Activated CD4-positive, alpha-beta T cell treated with anti-CD3 and anti-CD28 coated beads for 36 hours (primary cell): ENCODE measurements at regions of chr22 and their contacts with region 1.

Region 1: DNA sequence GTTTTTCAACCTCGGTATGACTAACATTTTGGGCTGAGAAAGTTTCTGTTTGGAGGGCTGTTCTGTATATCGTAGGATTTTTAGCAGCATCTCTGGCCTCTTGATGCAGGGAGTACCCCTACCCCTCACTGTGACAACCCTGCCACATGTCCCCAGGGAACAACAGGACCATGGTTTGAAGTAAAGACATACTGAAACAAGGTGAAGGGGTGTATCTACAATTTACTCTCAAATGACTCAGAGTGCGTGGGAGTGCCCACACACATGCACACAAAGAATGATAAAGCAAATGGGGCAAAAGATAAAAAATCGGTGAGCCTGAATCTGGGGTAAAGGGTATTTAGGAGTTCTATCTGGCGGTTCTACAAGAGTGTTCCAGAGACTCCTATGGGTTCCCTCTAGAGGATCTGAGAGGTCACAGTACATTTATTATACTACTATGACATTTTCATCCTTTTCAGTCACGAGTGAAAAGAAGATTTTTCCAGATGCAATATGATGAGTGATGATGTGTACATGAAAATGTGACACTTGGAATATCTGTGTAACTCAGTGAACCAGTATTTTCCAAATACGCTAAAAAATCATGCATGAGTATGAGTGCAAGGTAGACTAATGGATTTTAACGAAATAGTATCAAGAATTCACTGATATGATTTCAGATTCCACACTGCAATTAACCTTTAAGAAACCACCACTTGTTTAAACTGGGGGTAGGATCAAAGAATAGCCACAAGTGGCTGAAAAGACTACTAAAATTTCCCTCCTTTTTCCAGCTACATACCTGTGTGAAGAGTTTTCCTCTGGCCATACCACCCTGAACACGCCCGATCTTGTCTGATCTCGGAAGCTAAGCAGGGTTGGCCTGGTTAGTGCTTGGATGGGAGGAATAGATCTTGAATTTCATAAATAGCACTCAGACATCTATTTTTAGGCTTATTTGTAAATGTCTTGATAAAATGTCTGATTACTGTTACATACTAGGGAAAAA is 56.3 kb upstream of the YPEL1 start:
- DNase-seq: peak; percentile 70
- ATAC-seq: peak; percentile 93
- H3K4me3 Mint-ChIP-seq: peak overlapping the region; percentile 15
- H3K27ac Mint-ChIP-seq: peak overlapping the region; percentile 56
- H3K4me1 Mint-ChIP-seq: peaks cover 16% of the 10 kb centered on the region
- H3K27me3 Mint-ChIP-seq: no peaks in the 10 kb centered on the region

Region 2: DNA sequence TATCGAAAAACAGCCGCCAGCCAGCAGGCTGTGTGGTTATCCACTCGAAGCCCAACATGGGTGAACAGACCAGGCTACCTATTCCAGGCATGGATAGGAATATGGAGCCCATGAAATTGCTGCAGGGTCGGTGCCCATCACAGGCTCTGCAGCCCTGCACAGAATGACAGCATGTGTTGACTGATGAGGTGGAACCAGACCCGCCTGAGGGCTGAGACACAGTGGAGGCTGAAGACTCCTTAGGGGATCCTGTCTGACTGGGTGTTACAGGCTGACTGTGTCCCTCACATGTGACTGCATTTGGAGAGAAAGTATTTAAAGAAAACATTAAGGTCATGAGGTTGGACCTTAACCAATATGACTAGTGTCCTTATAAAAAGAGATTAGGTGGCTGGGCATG is 50.1 kb before region 1 on chr22:
- CTCF ChIA-PET with region 1: no interaction called
- POLR2A ChIA-PET with region 1: no interaction called
- intact Hi-C with region 1: loop called in 1 of 2 experiments (anchors 5 kb)
- DNase-seq: no peak
- ATAC-seq: no peak
- H3K4me3 Mint-ChIP-seq: no peak overlapping the region
- H3K27ac Mint-ChIP-seq: no peak overlapping the region
- H3K4me1 Mint-ChIP-seq: no peaks in the 10 kb centered on the region
- H3K27me3 Mint-ChIP-seq: no peaks in the 10 kb centered on the region

Region 3: GRCh38 chr22:21766691-21767462 is 25.1 kb before region 1 on chr22:
- CTCF ChIA-PET with region 1: interaction called, 3 read pairs
- POLR2A ChIA-PET with region 1: no interaction called
- intact Hi-C with region 1: loop called (anchors 1 kb)
- DNase-seq: peak; percentile 83
- ATAC-seq: peak; percentile 77
- H3K4me3 Mint-ChIP-seq: no peak overlapping the region
- H3K27ac Mint-ChIP-seq: peak overlapping the region; percentile 71
- H3K4me1 Mint-ChIP-seq: peaks cover 65% of the 10 kb centered on the region
- H3K27me3 Mint-ChIP-seq: no peaks in the 10 kb centered on the region

Region 4: GRCh38 chr22:21824445-21824912 is 32.5 kb after region 1 on chr22:
- CTCF ChIA-PET with region 1: no interaction called
- POLR2A ChIA-PET with region 1: no interaction called
- intact Hi-C with region 1: no loop called
- DNase-seq: no peak
- ATAC-seq: no peak
- H3K4me3 Mint-ChIP-seq: no peak overlapping the region
- H3K27ac Mint-ChIP-seq: peak overlapping the region; percentile 45
- H3K4me1 Mint-ChIP-seq: peaks cover 71% of the 10 kb centered on the region
- H3K27me3 Mint-ChIP-seq: no peaks in the 10 kb centered on the region

Region 5: DNA sequence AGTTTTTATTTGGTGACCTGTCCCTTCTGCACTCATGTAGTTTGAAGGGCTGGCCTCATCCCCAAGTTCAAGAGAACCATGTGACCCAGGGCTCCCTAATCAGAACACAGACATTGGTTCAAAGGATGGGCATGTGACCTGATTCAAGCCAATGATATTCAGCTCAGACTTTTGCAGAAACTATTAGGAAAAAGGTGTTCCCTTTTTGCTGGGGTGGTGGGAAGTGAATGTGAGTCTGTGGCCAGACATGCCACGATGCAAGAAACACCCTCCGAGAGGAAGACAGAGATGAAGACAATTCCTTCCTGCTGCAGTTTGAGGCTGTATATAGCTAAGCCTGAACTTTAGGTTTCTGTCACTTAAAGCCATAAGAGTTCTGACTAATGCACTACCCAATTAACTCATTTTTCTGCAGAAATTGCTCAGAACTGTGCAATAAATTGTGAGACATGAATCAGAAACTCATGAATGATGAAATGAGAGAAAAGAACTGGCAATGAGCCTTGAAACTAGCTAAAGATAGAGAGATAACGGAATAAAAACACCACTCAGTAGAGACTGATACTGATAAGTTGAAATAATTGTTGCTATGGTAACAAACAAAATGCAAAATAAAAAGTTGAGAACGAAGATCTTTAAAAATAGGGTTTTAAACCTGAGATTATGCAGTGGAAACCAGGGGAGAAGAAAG is 84.7 kb after region 1 on chr22:
- CTCF ChIA-PET with region 1: no interaction called
- POLR2A ChIA-PET with region 1: no interaction called
- intact Hi-C with region 1: loop called in 1 of 2 experiments (anchors 1 kb)
- DNase-seq: peak; percentile 63
- ATAC-seq: peak; percentile 96
- H3K4me3 Mint-ChIP-seq: no peak overlapping the region
- H3K27ac Mint-ChIP-seq: peak overlapping the region; percentile 93
- H3K4me1 Mint-ChIP-seq: peaks cover 20% of the 10 kb centered on the region
- H3K27me3 Mint-ChIP-seq: peaks cover 5% of the 10 kb centered on the region

Region 6: DNA sequence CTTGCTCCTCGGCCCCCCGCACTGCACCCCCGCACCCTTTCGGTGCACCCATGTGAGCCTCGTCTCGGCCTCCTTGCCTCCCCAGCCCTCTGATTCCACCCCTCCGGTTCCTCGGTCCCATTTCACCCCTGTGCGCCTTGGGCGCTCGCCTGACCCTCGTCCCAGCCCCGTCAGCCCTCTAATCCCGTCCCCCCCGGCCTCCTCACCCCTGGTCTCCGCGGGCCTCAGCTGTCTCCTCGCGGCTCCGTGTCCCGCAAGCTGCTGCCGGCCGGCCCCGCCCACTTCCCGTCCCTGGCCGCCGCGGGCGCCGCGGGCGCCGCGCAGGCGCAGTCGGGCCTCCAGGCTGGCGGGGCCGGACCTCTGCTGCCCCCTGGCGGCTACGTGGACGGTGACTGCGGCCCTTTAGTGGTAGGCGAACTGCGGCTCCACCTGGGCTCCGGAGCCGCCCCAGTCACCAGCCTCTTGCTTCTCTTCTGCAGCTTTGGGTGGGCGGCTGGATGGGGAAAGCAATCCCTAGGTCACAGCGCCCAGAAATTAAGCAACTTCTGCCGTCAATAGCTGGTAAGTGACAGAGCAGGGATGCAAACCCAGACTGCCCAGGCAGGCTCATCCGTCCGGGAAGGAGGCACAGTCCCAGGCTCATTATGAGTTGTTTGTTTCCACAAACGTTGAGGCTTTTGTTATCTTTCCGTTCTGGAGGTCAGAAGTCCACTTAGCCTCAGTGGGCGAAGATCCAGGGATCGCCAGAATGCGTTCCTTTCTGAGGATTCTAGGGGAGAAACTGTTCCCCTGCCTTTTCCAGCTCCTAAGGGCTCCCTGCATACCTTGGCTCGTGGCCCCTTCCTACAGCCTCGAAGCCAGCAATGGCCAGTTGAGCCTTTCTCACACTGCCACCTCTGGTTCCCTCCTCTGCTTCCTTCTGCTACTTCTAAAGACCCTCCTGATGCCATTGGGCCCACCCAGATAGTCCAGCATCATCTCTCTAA is 160.9 kb after region 1 on chr22 and contains the start of gene PPM1F:
- CTCF ChIA-PET with region 1: no interaction called
- POLR2A ChIA-PET with region 1: no interaction called
- intact Hi-C with region 1: loop called in 1 of 2 experiments (anchors 5 kb)
- DNase-seq: peak; percentile 95
- ATAC-seq: peak; percentile 91
- H3K4me3 Mint-ChIP-seq: peak within 1 kb of the TSS; percentile 78
- H3K27ac Mint-ChIP-seq: peak within 1 kb of the TSS; percentile 70
- H3K4me1 Mint-ChIP-seq: peaks cover 11% of the 10 kb centered on the region
- H3K27me3 Mint-ChIP-seq: no peaks in the 10 kb centered on the region
- total RNA-seq, gene PPM1F: 23.6 to 27.7 TPM